A673 (cell line): ENCODE measurements at regions of chr11 and their contacts with region 1.

Region 1: GRCh38 chr11:114340311-114341131 is 44.3 kb downstream of the NNMT start:
- DNase-seq: peak; percentile 82
- H3K4me3 ChIP-seq: peak overlapping the region; percentile 0
- H3K27ac ChIP-seq: no peak overlapping the region
- H3K4me1 ChIP-seq: no peaks in the 10 kb centered on the region
- H3K27me3 ChIP-seq: peaks cover 5% of the 10 kb centered on the region
- CTCF ChIP-seq: peak; percentile 92

Region 2: GRCh38 chr11:113728814-113729213 is 611.7 kb before region 1 on chr11:
- CTCF ChIA-PET with region 1: no interaction called
- POLR2A ChIA-PET with region 1: no interaction called
- intact Hi-C with region 1: no loop called
- DNase-seq: no peak
- H3K4me3 ChIP-seq: no peak overlapping the region
- H3K27ac ChIP-seq: no peak overlapping the region
- H3K4me1 ChIP-seq: no peaks in the 10 kb centered on the region
- H3K27me3 ChIP-seq: no peaks in the 10 kb centered on the region
- CTCF ChIP-seq: no peak

Region 3: DNA sequence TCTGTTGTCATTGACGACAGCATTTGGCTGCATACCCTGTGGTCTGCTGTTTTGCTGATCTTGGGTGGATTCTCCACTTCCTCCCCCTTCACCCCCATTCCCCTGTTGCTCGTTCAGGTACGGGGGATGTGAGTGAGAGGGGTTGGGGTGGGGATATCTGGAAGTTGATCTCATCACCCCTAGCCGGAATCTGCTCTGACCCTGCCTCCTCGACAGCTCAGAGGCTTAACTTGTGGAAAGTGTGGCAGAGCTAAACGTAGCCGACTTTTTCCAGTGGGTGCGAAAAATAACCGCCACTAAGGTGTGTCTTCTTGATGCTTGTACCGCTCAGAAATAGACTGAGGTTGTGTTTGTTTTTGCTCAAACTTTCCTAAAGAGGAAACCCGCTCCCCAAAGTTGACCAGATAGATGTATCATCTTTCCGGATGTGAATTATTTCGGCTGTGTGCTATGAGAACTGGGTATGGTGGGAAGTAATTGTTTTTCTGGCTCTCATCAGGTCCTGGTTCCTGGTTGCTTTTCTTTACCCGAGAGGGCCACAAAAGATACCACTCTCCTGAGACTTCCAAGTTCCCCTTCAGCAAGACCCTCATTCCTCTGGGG is 274.4 kb before region 1 on chr11:
- CTCF ChIA-PET with region 1: no interaction called
- POLR2A ChIA-PET with region 1: no interaction called
- intact Hi-C with region 1: no loop called
- DNase-seq: no peak
- H3K4me3 ChIP-seq: no peak overlapping the region
- H3K27ac ChIP-seq: no peak overlapping the region
- H3K4me1 ChIP-seq: peaks cover 6% of the 10 kb centered on the region
- H3K27me3 ChIP-seq: peaks cover 8% of the 10 kb centered on the region
- CTCF ChIP-seq: no peak

Region 4: GRCh38 chr11:114307524-114308203 is 32.9 kb before region 1 on chr11:
- CTCF ChIA-PET with region 1: no interaction called
- POLR2A ChIA-PET with region 1: no interaction called
- intact Hi-C with region 1: no loop called
- DNase-seq: peak; percentile 6
- H3K4me3 ChIP-seq: no peak overlapping the region
- H3K27ac ChIP-seq: no peak overlapping the region
- H3K4me1 ChIP-seq: no peaks in the 10 kb centered on the region
- H3K27me3 ChIP-seq: peaks cover 58% of the 10 kb centered on the region
- CTCF ChIP-seq: no peak

Region 5: GRCh38 chr11:114400217-114400914 is 59.8 kb after region 1 on chr11 and contains the starts of genes C11orf71 and RBM7:
- CTCF ChIA-PET with region 1: no interaction called
- POLR2A ChIA-PET with region 1: no interaction called
- intact Hi-C with region 1: loop called (anchors 5 kb)
- DNase-seq: peak; percentile 99
- H3K4me3 ChIP-seq: peak within 1 kb of the TSS; percentile 73
- H3K27ac ChIP-seq: peak within 1 kb of the TSS; percentile 95
- H3K4me1 ChIP-seq: peaks cover 12% of the 10 kb centered on the region
- H3K27me3 ChIP-seq: no peaks in the 10 kb centered on the region
- CTCF ChIP-seq: peak; percentile 35; the same call in 1 of the 2 replicates
- total RNA-seq, gene C11orf71: 7.4 and 11.4 TPM in 2 replicates
- total RNA-seq, gene RBM7: 37.0 and 41.1 TPM in 2 replicates

Region 6: DNA sequence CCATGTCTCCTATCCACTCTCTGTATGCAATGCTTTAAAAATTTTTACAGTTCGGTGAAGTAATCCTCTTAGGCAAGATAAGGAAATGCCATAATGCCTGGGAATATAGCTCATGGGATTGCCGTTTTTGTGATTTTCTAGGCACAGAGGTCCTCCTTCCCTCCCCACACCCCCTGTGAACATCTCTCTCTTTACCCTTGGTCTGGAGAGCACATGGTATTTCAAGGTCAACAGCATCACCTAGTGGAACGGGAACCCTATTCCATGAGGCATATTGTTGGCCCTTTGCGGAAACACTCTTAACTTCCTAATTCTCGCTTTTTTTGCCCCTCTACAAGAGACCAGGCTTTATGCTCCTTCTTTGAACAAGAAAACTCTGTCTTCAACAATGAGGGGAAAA is 246.3 kb after region 1 on chr11:
- CTCF ChIA-PET with region 1: no interaction called
- POLR2A ChIA-PET with region 1: no interaction called
- intact Hi-C with region 1: loop called (anchors 10 kb)
- DNase-seq: peak; percentile 7
- H3K4me3 ChIP-seq: no peak overlapping the region
- H3K27ac ChIP-seq: no peak overlapping the region
- H3K4me1 ChIP-seq: no peaks in the 10 kb centered on the region
- H3K27me3 ChIP-seq: no peaks in the 10 kb centered on the region
- CTCF ChIP-seq: no peak

Region 7: GRCh38 chr11:114762408-114762807 is 421.9 kb after region 1 on chr11:
- CTCF ChIA-PET with region 1: no interaction called
- POLR2A ChIA-PET with region 1: no interaction called
- intact Hi-C with region 1: loop called (anchors 1 kb)
- DNase-seq: peak; percentile 62
- H3K4me3 ChIP-seq: no peak overlapping the region
- H3K27ac ChIP-seq: no peak overlapping the region
- H3K4me1 ChIP-seq: no peaks in the 10 kb centered on the region
- H3K27me3 ChIP-seq: no peaks in the 10 kb centered on the region
- CTCF ChIP-seq: peak; percentile 79

Region 8: DNA sequence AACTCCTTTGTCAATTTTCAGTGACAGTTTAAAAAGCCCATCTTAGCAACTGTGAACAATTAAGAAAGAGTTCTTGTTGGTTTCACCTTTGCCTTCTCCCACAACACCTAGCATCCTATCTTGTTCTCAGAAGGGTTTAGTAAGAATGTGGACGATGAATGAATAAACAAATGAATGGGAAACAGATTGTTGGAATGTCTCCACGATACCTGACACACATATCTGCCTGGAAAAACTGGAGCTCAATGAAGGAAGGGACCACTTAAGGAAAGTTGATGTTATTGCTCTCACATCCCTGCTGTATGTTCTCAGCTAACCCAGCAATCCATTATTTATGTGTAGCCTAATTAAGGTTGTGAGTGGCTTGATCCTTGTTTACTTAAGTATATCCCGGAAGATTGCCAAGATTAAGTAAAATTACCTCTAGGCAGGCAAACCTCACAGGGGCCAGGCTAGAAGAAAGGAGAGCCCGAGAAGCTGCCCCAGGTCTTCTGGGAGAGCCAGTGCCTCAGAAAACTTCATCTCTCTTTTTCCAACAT is 624.2 kb after region 1 on chr11:
- CTCF ChIA-PET with region 1: no interaction called
- POLR2A ChIA-PET with region 1: no interaction called
- intact Hi-C with region 1: no loop called
- DNase-seq: no peak
- H3K4me3 ChIP-seq: no peak overlapping the region
- H3K27ac ChIP-seq: no peak overlapping the region
- H3K4me1 ChIP-seq: no peaks in the 10 kb centered on the region
- H3K27me3 ChIP-seq: no peaks in the 10 kb centered on the region
- CTCF ChIP-seq: no peak